ENCODE measurements at regions of chr7 and their contacts with region 1.

Region 1: GRCh38 chr7:54773472-54774399 is 14.7 kb upstream of the SEC61G start:
- DNase-seq: no peak
- ATAC-seq: peak; percentile 82
- H3K4me3 ChIP-seq: no peak overlapping the region
- H3K27ac ChIP-seq: no peak overlapping the region
- H3K4me1 ChIP-seq: no peaks in the 10 kb centered on the region
- H3K27me3 ChIP-seq: no peaks in the 10 kb centered on the region
- CTCF ChIP-seq: peak; percentile 71 to 89 (median 82)
- EP300 ChIP-seq: no peak
- POLR2A ChIP-seq: no peak
- RAD21 ChIP-seq: peak; percentile 96

Region 2: DNA sequence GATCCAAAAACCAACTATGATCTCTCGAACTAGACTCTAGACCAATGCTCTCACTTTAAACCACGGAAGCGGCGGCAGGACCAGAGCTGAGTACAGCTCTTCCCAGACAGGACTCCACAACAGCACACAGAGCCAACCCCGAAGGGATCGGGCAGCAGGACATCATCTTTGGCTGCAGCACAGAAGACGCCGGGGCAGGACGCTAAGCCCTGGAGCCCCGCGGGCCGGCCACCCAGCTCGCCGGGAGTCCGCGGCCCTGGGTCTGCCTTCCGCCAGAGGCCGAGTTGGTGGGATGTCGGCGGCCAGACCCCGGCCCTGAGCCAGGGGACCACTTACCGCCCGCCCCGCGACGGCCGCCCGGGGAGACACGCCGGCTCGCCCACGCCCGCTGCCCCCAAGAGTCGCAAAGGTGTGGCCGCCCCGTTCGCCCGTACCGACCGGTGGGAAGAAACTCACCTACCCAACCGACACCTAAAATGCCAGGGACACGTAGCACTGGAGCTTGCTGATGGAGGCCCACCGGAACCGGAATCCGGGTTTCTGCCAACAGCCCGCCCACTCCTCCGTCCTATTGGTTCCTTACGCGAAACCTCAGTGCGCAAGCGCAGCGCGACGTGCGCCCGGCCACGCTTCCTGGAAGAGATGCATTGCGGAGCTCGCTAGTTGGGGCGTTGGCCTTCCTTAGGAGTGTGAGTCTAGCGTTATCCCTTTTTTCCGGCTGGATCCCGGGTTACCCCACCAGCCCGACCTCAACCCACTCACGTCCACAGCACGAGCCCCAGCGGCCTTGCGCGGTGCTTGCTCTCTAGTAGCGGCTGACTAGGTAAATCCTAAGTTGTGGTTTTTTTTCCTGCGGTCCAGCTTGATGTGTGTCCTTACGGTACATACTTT is 14.8 kb before region 1 on chr7 and contains the start of gene SEC61G:
- CTCF ChIA-PET with region 1: interaction called, 11 read pairs
- POLR2A ChIA-PET with region 1: interaction called, 6 read pairs
- RAD21 ChIA-PET with region 1: interaction called, 3 read pairs
- SMC1A ChIA-PET with region 1: interaction called, 4 read pairs
- in situ Hi-C with region 1: no loop called
- intact Hi-C with region 1: no loop called
- DNase-seq: peak; percentile 90
- ATAC-seq: peak; percentile 96
- H3K4me3 ChIP-seq: peak within 1 kb of the TSS; percentile 97
- H3K27ac ChIP-seq: peak within 1 kb of the TSS; percentile 78
- H3K4me1 ChIP-seq: no peaks in the 10 kb centered on the region
- H3K27me3 ChIP-seq: no peaks in the 10 kb centered on the region
- CTCF ChIP-seq: no peak
- EP300 ChIP-seq: no peak
- POLR2A ChIP-seq: peak; percentile 92
- RAD21 ChIP-seq: no peak
- polyA plus RNA-seq, gene SEC61G: 709 to 809 TPM

Region 3: DNA sequence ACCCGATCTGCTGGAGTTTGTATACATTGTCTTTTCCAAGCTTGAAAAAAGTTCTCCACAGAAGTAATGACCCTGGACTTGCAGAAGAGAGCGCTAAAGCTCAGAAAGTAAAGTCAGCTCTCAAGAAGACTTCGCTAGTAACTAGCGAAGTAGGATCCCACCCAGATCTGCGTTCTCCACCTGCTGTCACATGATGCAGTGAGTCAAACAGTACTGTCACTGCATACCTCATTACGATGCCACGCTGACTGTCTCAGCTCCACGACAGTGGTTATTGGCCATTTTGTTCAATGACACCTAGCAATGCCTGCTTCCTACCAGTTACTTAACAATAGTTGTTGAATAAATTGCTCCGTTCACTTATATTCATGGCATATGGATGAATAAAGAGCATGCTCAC is 14.9 kb after region 1 on chr7:
- CTCF ChIA-PET with region 1: interaction called, 22 read pairs
- POLR2A ChIA-PET with region 1: no interaction called
- RAD21 ChIA-PET with region 1: interaction called, 3 read pairs
- SMC1A ChIA-PET with region 1: no interaction called
- in situ Hi-C with region 1: no loop called
- intact Hi-C with region 1: no loop called
- DNase-seq: peak; percentile 13
- ATAC-seq: peak; percentile 85
- H3K4me3 ChIP-seq: no peak overlapping the region
- H3K27ac ChIP-seq: no peak overlapping the region
- H3K4me1 ChIP-seq: no peaks in the 10 kb centered on the region
- H3K27me3 ChIP-seq: peaks cover 0 to 3% of the 10 kb centered on the region in 2 experiments; a peak in 1 of 4 replicates
- CTCF ChIP-seq: peak; percentile 47 to 61 (median 55); a peak in 5 of 6 replicates
- EP300 ChIP-seq: no peak
- POLR2A ChIP-seq: no peak
- RAD21 ChIP-seq: peak; percentile 91

Region 4: DNA sequence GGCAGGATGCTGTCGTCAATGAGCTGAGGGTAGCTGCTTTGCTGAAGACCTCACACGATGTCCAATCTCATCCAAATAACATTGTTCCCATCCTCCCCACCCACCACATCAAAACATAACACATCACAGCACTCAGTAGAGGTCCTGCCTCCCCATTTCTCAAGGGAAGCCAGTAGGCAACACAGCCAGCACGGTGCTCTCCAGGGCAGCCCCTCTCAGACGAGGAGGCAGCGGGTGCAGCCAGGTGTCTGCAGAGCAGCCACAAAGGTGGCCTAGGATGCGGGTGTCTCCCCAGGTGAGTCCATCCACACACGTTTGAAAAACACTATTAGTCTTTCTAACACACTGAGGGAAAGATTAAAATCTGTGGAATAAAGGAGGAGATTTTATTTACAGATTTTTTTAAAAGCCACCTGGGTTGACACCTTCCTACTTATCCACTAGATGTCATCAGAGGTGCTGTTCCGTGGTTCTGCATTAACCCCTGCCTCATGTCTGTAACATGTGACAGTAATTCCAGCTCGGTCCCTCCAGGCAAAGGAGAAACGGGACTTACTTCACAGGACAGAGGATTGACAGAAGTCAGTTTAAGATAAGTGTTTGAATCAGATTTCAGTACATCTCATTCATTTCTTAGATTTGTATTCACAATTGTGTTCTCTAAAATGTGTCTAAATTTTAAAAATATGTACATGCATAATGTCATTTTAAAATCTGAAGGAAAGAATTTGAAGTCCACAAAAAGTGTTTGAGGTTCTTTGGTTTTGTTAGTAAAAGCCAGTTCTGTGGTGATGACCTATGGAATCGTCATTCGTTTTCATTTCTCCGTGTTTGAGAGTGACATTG is 659.4 kb after region 1 on chr7:
- CTCF ChIA-PET with region 1: no interaction called
- POLR2A ChIA-PET with region 1: no interaction called
- RAD21 ChIA-PET with region 1: no interaction called
- SMC1A ChIA-PET with region 1: no interaction called
- in situ Hi-C with region 1: no loop called
- intact Hi-C with region 1: no loop called
- DNase-seq: no peak
- ATAC-seq: peak; percentile 85
- H3K4me3 ChIP-seq: no peak overlapping the region
- H3K27ac ChIP-seq: no peak overlapping the region
- H3K4me1 ChIP-seq: no peaks in the 10 kb centered on the region
- H3K27me3 ChIP-seq: no peaks in the 10 kb centered on the region
- CTCF ChIP-seq: peak; percentile 58 to 74 (median 61); a peak in 5 of 6 replicates
- EP300 ChIP-seq: no peak
- POLR2A ChIP-seq: no peak
- RAD21 ChIP-seq: peak; percentile 71